Thyroid gland (tissue), 4 donors: ENCODE measurements at regions of chr18 and their contacts with region 1.

Region 1: DNA sequence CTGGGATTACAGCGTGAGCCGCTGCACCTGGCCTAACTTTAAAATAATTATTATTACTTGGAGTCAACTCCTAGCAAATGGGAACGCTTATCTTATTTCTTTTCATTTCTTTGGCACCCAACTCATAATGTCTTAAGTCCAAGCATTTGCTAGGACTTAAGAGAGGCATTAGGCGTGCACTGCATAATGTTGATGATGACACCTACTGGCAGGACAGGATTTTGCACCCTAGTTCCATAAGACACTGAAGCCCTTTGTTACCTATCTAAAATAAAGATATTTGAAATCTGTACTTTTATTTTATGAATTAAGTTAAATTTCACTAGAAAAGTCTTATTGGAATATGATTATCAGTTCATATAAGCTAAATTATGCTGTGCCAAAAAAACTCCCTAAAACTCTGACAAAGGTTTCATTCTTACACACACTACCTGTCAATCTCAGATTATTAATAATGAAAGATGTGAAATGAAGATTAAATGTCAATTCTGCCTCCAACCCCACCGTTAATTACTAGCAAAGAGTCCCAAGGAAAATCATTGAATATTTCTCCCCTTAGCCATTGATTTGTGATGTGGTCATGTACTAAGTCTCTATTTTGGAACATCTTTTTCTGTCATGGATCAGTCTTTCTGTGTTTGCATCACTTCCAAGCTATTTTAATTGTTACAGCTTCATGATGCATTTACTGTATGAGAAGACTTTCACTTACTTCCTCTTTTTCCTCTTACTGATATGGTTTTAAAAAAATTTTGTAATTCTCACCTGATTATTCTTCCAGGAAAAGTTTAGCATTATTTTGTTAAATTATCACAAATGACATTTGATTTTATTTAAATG is 12.7 kb upstream of the CDH2 start:
- DNase-seq: peak; percentile 49 to 53
- H3K4me3 ChIP-seq: no peak overlapping the region
- H3K27ac ChIP-seq: no peak overlapping the region
- H3K4me1 ChIP-seq: no peaks in the 10 kb centered on the region
- H3K27me3 ChIP-seq: no peaks in the 10 kb centered on the region
- CTCF ChIP-seq: peak; percentile 35 to 71 (median 52)
- POLR2A ChIP-seq: no peak

Region 2: GRCh38 chr18:27778441-27778840 is 411.2 kb before region 1 on chr18:
- intact Hi-C with region 1: loop called (anchors 5 kb)
- DNase-seq: no peak
- H3K4me3 ChIP-seq: no peak overlapping the region
- H3K27ac ChIP-seq: no peak overlapping the region
- H3K4me1 ChIP-seq: no peaks in the 10 kb centered on the region
- H3K27me3 ChIP-seq: no peaks in the 10 kb centered on the region
- CTCF ChIP-seq: peak in 2 of 6 experiments; percentile 11 to 23
- POLR2A ChIP-seq: no peak